ENCODE measurements at regions of chr6 and their contacts with region 1.

Region 1: DNA sequence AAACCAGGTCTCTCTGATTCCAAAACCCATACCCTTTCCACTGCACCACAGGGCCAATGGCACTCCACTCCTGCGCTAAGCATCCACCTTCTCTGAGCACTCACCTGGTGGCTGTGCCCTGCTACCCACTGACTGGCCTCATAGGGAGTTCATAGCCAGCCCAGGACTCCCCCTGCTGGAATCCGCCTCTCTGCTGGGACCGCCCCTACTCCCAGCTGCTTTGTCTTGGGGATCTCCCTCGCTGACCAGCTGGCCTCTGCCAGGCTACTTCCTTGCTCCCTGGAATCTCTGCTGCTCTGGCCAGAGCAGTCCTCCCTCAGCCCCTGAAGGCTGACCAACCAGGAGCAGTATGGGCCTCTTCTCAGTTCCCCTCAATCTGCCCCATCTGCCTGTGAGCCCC is 129.7 kb downstream of the FAXC start:
- DNase-seq: peak; percentile 73
- ATAC-seq: peak; percentile 100
- H3K4me3 Mint-ChIP-seq: peak overlapping the region; percentile 18; the same call in 1 of the 2 replicates
- H3K27ac Mint-ChIP-seq: no peak overlapping the region
- H3K4me1 Mint-ChIP-seq: peaks cover 13% of the 10 kb centered on the region
- H3K27me3 Mint-ChIP-seq: no peaks in the 10 kb centered on the region
- CTCF ChIP-seq: no peak

Region 2: DNA sequence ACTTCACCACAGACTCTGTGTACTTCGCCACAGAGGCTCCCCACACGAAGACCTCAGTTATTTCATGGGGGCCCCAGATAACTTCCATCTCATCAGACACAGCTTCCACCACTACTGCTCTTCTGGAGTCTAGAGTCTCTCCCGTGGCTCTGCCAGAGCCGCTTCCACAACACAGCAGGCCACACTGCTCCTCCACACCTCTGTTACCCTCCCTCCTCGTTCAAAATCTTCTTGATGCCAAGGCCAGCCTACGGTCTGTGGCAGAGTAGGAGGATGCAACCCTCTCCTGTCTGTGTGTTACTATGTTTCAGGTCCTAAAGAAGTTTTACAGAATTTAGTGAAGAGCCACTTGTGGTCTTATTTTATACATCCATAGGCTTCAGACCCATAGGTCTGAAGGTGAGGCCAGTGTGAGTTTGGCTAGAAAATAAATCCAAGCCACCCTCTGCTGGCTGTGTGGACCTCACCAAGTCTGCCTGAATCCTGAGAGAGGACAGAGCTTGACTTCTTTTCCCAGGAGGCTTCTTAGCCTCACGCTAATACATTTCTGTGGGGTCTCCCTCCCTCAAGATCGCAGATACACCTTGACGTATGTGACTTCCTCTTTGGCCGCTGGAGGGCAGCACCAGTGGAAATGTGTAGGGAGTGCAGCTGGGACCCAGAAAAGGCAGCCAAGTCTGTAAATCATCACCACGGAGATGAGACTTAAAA is 68.0 kb before region 1 on chr6:
- CTCF ChIA-PET with region 1: interaction called, 15 read pairs
- POLR2A ChIA-PET with region 1: no interaction called
- DNase-seq: peak; percentile 84
- ATAC-seq: peak; percentile 93
- H3K4me3 Mint-ChIP-seq: no peak overlapping the region
- H3K27ac Mint-ChIP-seq: no peak overlapping the region
- H3K4me1 Mint-ChIP-seq: peaks cover 10% of the 10 kb centered on the region
- H3K27me3 Mint-ChIP-seq: peaks cover 4% of the 10 kb centered on the region; the same call in 1 of the 2 replicates
- CTCF ChIP-seq: peak; percentile 60

Region 3: GRCh38 chr6:99241905-99242534 is 22.2 kb after region 1 on chr6:
- CTCF ChIA-PET with region 1: interaction called, 10 read pairs
- POLR2A ChIA-PET with region 1: no interaction called
- DNase-seq: peak; percentile 37
- ATAC-seq: peak; percentile 61
- H3K4me3 Mint-ChIP-seq: no peak overlapping the region
- H3K27ac Mint-ChIP-seq: no peak overlapping the region
- H3K4me1 Mint-ChIP-seq: peaks cover 5% of the 10 kb centered on the region; the same call in 1 of the 2 replicates
- H3K27me3 Mint-ChIP-seq: no peaks in the 10 kb centered on the region
- CTCF ChIP-seq: peak; percentile 38; the same call in 1 of the 2 replicates

Measured in WTC11 (cell line).